ENCODE measurements at regions of chr2 and their contacts with region 1.

Region 1: DNA sequence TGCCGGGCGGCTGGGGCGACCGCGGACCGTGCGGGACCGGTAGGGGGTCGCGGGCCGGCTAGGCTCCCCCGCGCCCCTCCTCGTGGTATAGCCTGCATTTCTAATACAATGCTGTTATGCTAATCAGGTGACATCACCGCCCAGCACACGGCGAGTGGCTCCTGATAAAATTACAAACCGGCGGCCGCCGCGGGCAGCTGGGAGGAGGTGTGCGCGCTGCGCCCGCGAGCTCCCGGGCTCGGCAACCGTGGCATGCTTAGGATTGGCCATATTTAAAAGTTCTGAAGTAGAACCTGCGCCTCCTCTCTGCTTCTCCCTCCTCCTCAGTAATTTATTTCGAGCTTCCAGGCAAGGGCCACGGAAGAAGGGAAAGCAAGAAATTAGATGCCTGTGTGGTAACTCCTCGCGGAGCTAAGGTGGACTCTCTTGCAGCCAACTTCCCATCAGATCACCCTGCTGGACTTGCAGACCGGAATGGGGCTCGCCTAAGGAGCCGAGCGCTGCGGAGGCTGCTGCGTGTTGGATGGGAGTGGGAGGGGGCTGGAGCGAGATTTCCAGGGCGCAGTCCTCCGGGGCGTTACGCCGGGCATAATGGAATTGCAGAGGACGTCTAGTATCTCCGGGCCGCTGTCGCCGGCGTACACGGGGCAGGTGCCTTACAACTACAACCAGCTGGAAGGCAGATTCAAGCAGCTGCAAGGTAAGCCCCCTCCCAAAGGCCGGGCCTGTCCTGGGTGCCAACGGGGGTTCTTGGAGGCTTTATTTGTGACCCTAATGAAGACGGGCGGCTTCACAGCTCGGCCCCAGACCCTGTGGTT is 102.3 kb downstream of the SPTBN1 start:
- DNase-seq: peak; percentile 84
- ATAC-seq: peak; percentile 33

Region 2: DNA sequence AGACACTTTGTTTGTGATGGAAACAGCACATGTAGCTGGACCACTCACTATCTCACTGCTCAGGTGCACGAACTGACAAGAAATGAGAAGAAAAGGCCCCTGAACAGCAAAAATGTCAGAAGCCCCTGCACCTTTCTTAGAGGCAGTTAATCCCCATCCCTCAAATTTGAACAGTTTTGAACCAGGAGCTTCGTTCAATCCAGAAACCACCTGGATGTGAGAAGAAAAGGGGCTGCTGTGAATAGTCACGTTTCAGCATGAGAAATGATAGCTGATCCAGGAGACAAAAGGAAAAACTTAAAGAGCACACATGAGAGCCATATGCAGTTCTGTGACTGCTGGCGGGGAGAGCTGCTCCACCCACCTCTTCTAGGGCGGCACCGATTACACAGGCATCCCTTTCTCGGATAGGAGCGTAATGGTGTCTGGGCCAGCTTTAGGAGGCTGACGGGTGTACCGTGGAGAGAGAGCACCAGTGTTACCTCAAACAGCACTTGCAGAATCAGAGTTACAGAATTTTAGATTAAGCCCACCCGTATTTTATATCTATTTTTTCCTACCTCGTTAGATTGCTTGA is 48.1 kb after region 1 on chr2:
- intact Hi-C with region 1: loop called (anchors 5 kb)
- DNase-seq: no peak
- ATAC-seq: peak; percentile 70

Region 3: DNA sequence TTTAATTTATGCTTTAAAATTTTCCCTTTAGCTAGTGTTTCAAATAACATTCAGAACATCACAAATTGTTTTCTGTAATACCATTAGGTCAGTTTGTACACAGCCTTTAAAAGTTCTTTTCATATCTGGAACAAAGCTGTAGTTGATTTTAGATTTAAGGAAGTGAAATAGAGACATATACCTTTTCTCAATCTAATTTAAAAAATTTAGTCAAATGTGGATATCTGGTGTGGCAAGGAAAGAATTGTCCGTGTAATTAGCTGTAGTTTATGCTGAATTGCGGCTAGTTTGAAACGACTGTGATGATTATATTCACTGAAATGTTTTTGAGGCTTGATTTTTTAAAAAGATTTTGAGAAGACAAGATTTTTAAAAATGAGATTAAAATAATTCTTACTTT is 225.0 kb after region 1 on chr2:
- intact Hi-C with region 1: no loop called
- DNase-seq: no peak
- ATAC-seq: no peak

Measured in Right ventricle myocardium inferior (tissue), 1 donor.